Left cardiac atrium (tissue), 4 donors: ENCODE measurements at regions of chr3 and their contacts with region 1.

Region 1: GRCh38 chr3:15098503-15099363 is at the start of gene RBSN:
- DNase-seq: peak; percentile 98
- ATAC-seq: peak; percentile 78 to 85
- total RNA-seq, gene RBSN: 18.7 to 20.8 TPM

Region 2: GRCh38 chr3:14297784-14298236 is 800.9 kb before region 1 on chr3:
- intact Hi-C with region 1: no loop called
- DNase-seq: peak; percentile 63
- ATAC-seq: peak; percentile 62 to 65

Region 3: DNA sequence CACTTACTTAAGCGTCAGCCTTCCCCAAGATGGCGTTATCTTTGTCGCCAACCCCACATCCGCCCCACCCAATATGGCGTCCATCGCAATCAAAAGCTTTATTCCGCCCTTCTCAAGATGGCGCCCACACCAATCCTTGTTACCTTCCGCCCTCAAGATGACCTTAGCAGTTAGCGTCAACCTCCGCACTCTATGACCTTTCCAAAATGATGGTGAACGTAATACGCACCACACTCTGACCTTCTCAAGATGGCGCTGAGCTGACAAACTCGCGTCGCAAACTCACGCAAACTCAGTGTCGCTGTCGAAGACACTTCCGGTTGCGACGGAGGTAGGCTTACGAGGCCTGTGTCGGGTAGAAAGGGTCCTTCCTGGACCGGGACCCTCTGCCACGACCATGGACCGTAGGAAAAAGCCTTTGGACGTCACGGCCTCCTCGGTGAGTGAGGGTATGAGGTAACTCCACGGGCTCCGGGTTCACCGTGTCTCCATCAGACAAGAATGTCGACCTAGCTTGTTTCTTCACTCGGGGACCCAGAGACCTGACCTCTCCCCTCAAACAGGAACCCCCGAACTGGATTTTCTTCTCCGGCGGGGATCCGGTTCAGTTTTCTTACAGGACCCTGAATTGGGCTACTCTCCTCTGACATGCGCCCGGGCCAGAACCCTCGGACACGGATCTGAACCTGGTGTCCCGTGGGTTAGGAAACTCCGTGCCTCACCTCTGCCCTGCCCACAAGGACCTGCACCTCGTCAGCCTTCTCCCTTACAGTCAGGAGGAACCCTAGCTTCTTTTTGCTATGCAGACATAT is 447.1 kb before region 1 on chr3 and contains the start of gene CCDC174:
- intact Hi-C with region 1: loop called in 1 of 2 experiments (anchors 10 kb)
- DNase-seq: peak; percentile 93
- ATAC-seq: peak; percentile 98 to 99
- total RNA-seq, gene CCDC174: 12.0 to 13.0 TPM